ENCODE measurements at regions of chr19 and their contacts with region 1.

Region 1: GRCh38 chr19:21358768-21359451 is at the start of gene ZNF738:
- DNase-seq: peak; percentile 88 to 97 (median 96)
- H3K4me3 ChIP-seq: peak within 1 kb of the TSS; percentile 59 to 96 (median 84)
- H3K27ac ChIP-seq: peak within 1 kb of the TSS in 53 of 59 donors; percentile 17 to 88 (median 73)
- H3K27me3 ChIP-seq: no peaks in the 10 kb centered on the region
- CTCF ChIP-seq: peak in 16 of 56 donors; percentile 5 to 37 (median 16)
- total RNA-seq, gene ZNF738: 3.9 to 28.7 (median 11.3) TPM

Region 2: GRCh38 chr19:21233691-21234090 is 125.2 kb before region 1 on chr19:
- intact Hi-C with region 1: no loop called
- DNase-seq: no peak
- H3K4me3 ChIP-seq: no peak overlapping the region
- H3K27ac ChIP-seq: no peak overlapping the region
- H3K27me3 ChIP-seq: no peaks in the 10 kb centered on the region
- CTCF ChIP-seq: no peak

Region 3: DNA sequence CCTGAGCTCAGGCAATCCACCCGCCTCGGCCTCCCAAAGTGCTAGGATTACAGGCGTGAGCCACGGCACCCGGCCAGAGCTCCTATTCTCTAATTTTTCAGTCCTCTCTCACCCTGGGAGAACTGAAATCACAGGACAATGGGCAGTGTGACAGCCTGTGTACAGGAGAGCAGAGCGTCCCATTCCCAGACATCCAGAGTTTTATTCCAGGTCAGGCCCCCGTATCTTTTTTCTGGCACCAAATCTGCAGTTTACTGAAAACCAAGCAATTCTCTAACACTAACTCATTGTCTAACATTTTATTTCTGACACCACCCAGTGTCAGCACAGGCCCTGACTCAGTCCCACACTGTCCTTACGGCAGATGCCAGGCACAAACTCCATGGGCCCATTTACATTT is 36.4 kb before region 1 on chr19:
- intact Hi-C with region 1: loop called in 1 of 2 experiments (anchors 5 kb)
- DNase-seq: peak in 8 of 10 donors; percentile 56 to 80 (median 74)
- H3K4me3 ChIP-seq: peak overlapping the region in 35 of 59 donors; percentile 0 to 47 (median 19)
- H3K27ac ChIP-seq: peak overlapping the region; percentile 63 to 99 (median 96)
- H3K27me3 ChIP-seq: no peaks in the 10 kb centered on the region
- CTCF ChIP-seq: peak in 9 of 56 donors; percentile 8 to 36 (median 18)

Region 4: DNA sequence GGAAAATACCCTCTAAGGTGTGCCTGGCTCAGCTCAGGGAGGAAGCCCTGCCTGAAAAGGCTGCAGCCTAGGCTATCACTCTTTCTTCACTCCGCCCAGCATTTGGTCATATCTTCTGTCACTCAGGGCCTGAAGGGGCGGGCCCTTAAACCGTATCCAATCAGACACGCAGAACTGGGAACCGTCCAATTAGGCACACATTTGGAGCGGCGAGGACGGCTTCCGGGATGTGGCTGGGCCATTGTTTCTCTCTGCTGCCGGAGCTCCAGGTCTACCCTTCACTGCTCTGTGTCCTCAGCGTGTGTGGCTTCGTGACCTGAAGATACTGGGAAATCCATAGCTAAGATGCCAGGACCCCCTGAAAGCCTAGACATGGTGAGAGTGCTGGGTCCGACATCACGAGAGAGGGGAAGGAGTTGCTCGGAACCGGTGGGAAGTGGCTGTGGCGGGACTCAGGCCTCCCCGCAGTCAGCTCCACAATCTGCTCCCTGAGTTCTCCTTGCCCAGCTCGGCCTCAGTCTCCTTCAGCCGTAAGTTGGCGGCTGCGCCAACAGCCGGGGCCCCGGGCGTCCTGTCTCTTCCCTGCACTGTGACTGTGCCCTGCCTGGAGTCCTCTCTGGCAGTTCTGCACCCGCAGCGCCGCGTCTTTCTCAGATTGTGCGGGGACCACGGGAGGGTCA is 38.1 kb after region 1 on chr19 and contains the start of gene ZNF493:
- intact Hi-C with region 1: loop called in 1 of 2 experiments (anchors 5 kb)
- DNase-seq: peak; percentile 85 to 98 (median 94)
- H3K4me3 ChIP-seq: peak within 1 kb of the TSS; percentile 54 to 99 (median 85)
- H3K27ac ChIP-seq: peak within 1 kb of the TSS in 55 of 59 donors; percentile 10 to 92 (median 78)
- H3K27me3 ChIP-seq: no peaks in the 10 kb centered on the region
- CTCF ChIP-seq: peak in 9 of 56 donors; percentile 6 to 37 (median 13)
- total RNA-seq, gene ZNF493: 47.5 to 105 (median 71.6) TPM